Endothelial cell of umbilical vein (primary cell): ENCODE measurements at regions of chr7 and their contacts with region 1.

Region 1: DNA sequence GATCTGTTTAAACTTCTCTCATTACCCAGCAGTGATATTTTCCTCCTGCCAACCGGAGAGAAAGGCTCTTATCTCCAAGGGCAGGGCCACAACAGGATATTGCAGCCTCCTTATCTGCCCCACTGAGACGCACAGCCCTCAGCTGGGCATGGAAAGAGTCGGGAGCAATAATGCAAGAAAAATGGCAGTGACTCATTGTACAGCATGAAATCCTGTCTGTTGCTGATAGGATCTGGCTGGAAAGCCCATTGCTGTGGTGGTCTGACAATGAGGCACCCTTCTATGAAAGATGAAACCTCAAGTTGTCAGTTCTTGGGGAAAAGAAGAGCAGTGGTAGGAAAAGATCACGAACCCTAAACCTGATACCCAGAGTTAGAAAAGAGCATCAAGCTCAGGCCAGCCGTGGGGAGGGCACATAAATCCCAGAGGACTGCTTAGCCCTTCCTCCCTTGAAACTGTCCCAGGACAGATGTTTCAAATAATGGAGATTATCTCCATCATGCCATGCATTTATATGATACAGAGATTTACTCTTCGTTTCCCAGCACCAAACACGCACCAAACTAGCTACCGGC is 47.0 kb upstream of the FIGNL1 start:
- DNase-seq: peak; percentile 99
- H3K4me3 ChIP-seq: peak overlapping the region in 1 of 3 experiments; percentile 4
- H3K27ac ChIP-seq: peak overlapping the region; percentile 99
- H3K4me1 ChIP-seq: peaks cover 40% of the 10 kb centered on the region
- H3K27me3 ChIP-seq: no peaks in the 10 kb centered on the region
- CTCF ChIP-seq: no peak
- POLR2A ChIP-seq: peak; percentile 67

Region 2: GRCh38 chr7:50486512-50486911 is 10.6 kb before region 1 on chr7:
- CTCF ChIA-PET with region 1: interaction called, 16 read pairs
- POLR2A ChIA-PET with region 1: no interaction called
- dilution Hi-C with region 1: no loop called
- intact Hi-C with region 1: no loop called
- DNase-seq: no peak
- H3K4me3 ChIP-seq: no peak overlapping the region
- H3K27ac ChIP-seq: no peak overlapping the region
- H3K4me1 ChIP-seq: no peaks in the 10 kb centered on the region
- H3K27me3 ChIP-seq: no peaks in the 10 kb centered on the region
- CTCF ChIP-seq: no peak
- POLR2A ChIP-seq: no peak

Region 3: DNA sequence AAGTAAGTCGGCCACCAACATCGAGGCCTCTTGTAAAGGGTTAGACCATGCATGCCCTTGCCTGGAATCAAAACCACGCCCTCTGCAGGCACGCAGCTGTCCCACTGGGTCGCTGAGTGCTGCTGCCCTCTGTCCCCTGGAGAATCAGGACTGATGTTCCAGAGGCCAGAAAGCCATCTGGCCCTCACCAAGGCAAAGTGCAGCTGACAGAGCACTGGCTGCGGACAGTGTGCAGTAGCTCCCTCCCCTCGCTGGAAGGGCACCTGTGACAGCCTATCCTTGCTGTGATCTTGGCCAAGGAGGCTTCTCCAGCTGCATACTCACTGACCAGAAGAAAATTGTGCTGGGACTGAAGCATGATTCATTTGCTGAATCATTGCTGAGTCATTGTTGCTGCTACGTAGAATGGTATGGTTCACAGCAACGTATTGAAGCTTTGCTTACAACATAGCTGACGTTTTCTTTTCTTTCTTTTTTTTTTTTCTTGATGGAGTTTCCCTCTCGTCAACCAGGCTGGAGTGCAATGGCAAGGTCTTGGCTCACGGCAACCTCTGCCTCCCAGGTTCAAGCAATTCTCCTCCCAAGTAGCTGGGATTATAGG is 37.6 kb after region 1 on chr7:
- CTCF ChIA-PET with region 1: interaction called, 6 read pairs
- POLR2A ChIA-PET with region 1: interaction called, 5 read pairs
- dilution Hi-C with region 1: no loop called
- intact Hi-C with region 1: loop called (anchors 1 kb)
- DNase-seq: peak; percentile 94
- H3K4me3 ChIP-seq: no peak overlapping the region
- H3K27ac ChIP-seq: peak overlapping the region; percentile 33
- H3K4me1 ChIP-seq: peaks cover 13% of the 10 kb centered on the region
- H3K27me3 ChIP-seq: no peaks in the 10 kb centered on the region
- CTCF ChIP-seq: no peak
- POLR2A ChIP-seq: no peak

Region 4: DNA sequence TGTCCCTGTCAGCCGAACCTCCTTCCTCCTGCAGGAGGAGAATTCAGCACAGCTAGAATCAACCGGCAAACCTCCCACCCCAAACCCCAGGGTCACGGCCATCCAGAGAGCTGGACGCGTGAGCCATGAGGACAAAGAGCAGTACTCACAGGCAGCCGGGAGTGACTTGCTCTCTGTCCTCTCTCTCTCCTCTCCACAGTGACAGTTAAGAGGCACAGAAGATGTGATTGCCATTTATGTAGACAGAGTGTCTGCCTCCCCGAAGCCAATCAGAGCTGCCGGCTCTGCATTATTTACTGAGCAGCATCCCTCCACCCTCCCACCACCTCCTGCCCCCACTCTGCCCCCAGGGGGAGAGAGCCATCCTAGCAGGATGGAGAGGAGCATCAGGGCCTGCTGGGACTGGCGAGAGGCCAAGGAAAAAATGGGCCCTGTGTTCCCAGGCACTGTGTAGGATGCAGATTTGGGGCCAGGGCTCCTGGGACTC is 63.8 kb after region 1 on chr7:
- CTCF ChIA-PET with region 1: no interaction called
- POLR2A ChIA-PET with region 1: no interaction called
- dilution Hi-C with region 1: no loop called
- intact Hi-C with region 1: no loop called
- DNase-seq: no peak
- H3K4me3 ChIP-seq: no peak overlapping the region
- H3K27ac ChIP-seq: no peak overlapping the region
- H3K4me1 ChIP-seq: no peaks in the 10 kb centered on the region
- H3K27me3 ChIP-seq: peaks cover 6 to 11% of the 10 kb centered on the region in 2 experiments
- CTCF ChIP-seq: no peak
- POLR2A ChIP-seq: no peak

Region 5: DNA sequence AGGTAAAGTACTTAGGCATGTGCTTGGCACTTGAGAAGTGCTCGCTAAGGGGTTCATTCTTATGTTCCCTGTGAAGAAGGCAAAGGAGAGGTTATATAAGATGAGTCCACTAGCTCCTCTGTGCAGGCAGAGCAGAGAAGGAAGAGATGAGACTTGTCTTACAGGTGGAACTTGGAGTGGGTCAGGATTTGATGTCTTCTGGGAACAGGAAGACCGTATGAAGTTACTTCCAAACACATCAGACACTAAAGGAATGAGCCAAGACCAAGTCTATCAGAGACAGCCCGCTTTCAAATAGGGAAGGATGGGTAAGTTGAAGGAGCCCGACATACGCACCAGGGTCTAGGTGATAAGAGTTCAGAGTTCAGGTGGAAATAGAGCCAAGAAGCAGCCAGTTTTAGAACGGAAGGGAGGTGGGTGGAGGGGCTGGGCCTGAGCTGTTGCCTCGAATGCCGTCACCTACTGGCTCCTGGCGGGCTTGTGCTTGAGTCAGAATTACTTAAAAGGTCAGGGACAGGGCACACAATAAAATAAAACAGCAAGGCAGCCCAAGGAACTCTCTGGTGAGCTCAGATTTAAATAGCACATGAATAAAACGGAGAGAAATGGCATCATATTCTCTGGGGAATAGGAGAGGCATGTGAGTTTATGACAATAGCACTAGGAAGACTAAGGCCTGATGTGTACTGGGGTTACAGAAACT is 341.7 kb after region 1 on chr7:
- CTCF ChIA-PET with region 1: no interaction called
- POLR2A ChIA-PET with region 1: no interaction called
- dilution Hi-C with region 1: no loop called
- intact Hi-C with region 1: loop called (anchors 2 kb)
- DNase-seq: peak; percentile 31
- H3K4me3 ChIP-seq: no peak overlapping the region
- H3K27ac ChIP-seq: peak overlapping the region; percentile 92
- H3K4me1 ChIP-seq: peaks cover 23% of the 10 kb centered on the region
- H3K27me3 ChIP-seq: no peaks in the 10 kb centered on the region
- CTCF ChIP-seq: no peak
- POLR2A ChIP-seq: no peak